Naive thymus-derived CD4-positive, alpha-beta T cell (primary cell): ENCODE measurements at regions of chr10 and their contacts with region 1.

Region 1: GRCh38 chr10:6088721-6089390 is at the start of gene RBM17:
- DNase-seq: peak; percentile 94 to 100 (median 99)
- ATAC-seq: peak; percentile 95
- H3K4me3 ChIP-seq: peak within 1 kb of the TSS; percentile 85
- H3K4me3 Mint-ChIP-seq: peak within 1 kb of the TSS; percentile 84 to 100 (median 94)
- H3K27ac ChIP-seq: peak within 1 kb of the TSS; percentile 84
- H3K27ac Mint-ChIP-seq: peak within 1 kb of the TSS; percentile 77 to 91 (median 87)
- H3K4me1 ChIP-seq: peaks cover 26 to 49% of the 10 kb centered on the region in 2 donors
- H3K4me1 Mint-ChIP-seq: peaks cover 46 to 77% (median 67%) of the 10 kb centered on the region in 7 donors
- H3K27me3 ChIP-seq: no peaks in the 10 kb centered on the region
- H3K27me3 Mint-ChIP-seq: no peaks in the 10 kb centered on the region
- total RNA-seq, gene RBM17: 120 to 158 (median 127) TPM

Region 2: GRCh38 chr10:5889624-5890451 is 199.0 kb before region 1 on chr10 and contains the starts of genes ANKRD16 and FBH1:
- CTCF ChIA-PET with region 1: no interaction called
- POLR2A ChIA-PET with region 1: no interaction called
- intact Hi-C with region 1: loop called (anchors 1 to 5 kb)
- DNase-seq: peak; percentile 94 to 100 (median 96)
- ATAC-seq: peak; percentile 96
- H3K4me3 ChIP-seq: peak within 1 kb of the TSS; percentile 70
- H3K4me3 Mint-ChIP-seq: peak within 1 kb of the TSS; percentile 90 to 97 (median 94)
- H3K27ac ChIP-seq: peak within 1 kb of the TSS; percentile 81
- H3K27ac Mint-ChIP-seq: peak within 1 kb of the TSS; percentile 80 to 94 (median 87)
- H3K4me1 ChIP-seq: peaks cover 12% of the 10 kb centered on the region in 2 donors
- H3K4me1 Mint-ChIP-seq: peaks cover 34 to 64% (median 60%) of the 10 kb centered on the region in 7 donors
- H3K27me3 ChIP-seq: no peaks in the 10 kb centered on the region
- H3K27me3 Mint-ChIP-seq: no peaks in the 10 kb centered on the region
- total RNA-seq, gene ANKRD16: 4.6 to 9.8 (median 7.2) TPM
- total RNA-seq, gene FBH1: 64.8 to 105 (median 78.6) TPM

Region 3: GRCh38 chr10:6014241-6014761 is 74.6 kb before region 1 on chr10:
- CTCF ChIA-PET with region 1: interaction called, 84 read pairs
- POLR2A ChIA-PET with region 1: interaction called, 22 read pairs
- intact Hi-C with region 1: loop called (anchors 1 kb)
- DNase-seq: peak in 7 of 9 donors; percentile 73 to 89 (median 86)
- ATAC-seq: peak; percentile 98
- H3K4me3 ChIP-seq: no peak overlapping the region
- H3K4me3 Mint-ChIP-seq: peak overlapping the region in 9 of 10 donors; percentile 5 to 61 (median 36)
- H3K27ac ChIP-seq: peak overlapping the region; percentile 82
- H3K27ac Mint-ChIP-seq: peak overlapping the region; percentile 85 to 99 (median 96)
- H3K4me1 ChIP-seq: peaks cover 9 to 15% of the 10 kb centered on the region in 2 donors
- H3K4me1 Mint-ChIP-seq: peaks cover 3 to 55% (median 25%) of the 10 kb centered on the region in 7 donors
- H3K27me3 ChIP-seq: no peaks in the 10 kb centered on the region
- H3K27me3 Mint-ChIP-seq: no peaks in the 10 kb centered on the region

Region 4: DNA sequence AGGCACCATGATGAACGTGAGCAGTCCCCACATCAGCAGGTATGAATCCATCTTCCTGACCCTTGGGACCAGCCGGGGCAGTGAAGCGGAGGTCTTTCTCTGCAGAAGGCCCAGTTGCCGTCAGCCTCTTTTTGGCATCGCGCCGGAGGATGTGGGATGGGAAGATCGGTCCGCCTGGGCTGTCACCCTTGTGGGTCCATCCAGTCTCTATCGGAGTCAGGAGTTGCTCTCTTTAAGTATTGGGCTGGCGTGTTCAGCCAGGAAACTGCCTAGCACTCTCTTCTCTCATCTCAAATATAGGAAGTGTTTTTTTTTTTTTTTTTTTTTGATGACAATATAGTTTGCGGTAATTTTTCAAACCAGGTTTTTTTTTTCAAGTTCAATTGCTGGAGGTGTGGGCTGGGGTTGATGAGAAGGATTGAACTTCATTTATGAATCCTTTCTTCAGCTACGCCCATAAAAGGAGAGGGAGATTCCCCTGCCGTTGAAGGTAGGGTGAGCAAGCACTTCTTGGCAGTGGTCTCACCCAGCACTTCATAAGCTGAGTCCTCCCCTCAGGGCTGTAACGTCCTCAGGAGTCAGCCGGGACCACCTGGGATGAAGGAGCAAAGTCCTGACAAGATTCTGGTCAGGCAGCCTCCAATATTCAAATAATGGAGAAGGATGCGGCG is 26.6 kb before region 1 on chr10 and contains the start of gene IL2RA:
- CTCF ChIA-PET with region 1: interaction called, 15 read pairs
- POLR2A ChIA-PET with region 1: interaction called, 21 read pairs
- intact Hi-C with region 1: loop called in 1 of 2 experiments (anchors 1 kb)
- DNase-seq: peak in 8 of 9 donors; percentile 57 to 79 (median 74)
- ATAC-seq: peak; percentile 92
- H3K4me3 ChIP-seq: peak within 1 kb of the TSS; percentile 54
- H3K4me3 Mint-ChIP-seq: peak within 1 kb of the TSS; percentile 77 to 91 (median 86)
- H3K27ac ChIP-seq: peak within 1 kb of the TSS; percentile 70
- H3K27ac Mint-ChIP-seq: peak within 1 kb of the TSS; percentile 75 to 94 (median 85)
- H3K4me1 ChIP-seq: peaks cover 16 to 27% of the 10 kb centered on the region in 2 donors
- H3K4me1 Mint-ChIP-seq: peaks cover 43 to 82% (median 71%) of the 10 kb centered on the region in 7 donors
- H3K27me3 ChIP-seq: no peaks in the 10 kb centered on the region
- H3K27me3 Mint-ChIP-seq: no peaks in the 10 kb centered on the region
- total RNA-seq, gene IL2RA: 2.5 to 266 (median 6.7) TPM

Region 5: DNA sequence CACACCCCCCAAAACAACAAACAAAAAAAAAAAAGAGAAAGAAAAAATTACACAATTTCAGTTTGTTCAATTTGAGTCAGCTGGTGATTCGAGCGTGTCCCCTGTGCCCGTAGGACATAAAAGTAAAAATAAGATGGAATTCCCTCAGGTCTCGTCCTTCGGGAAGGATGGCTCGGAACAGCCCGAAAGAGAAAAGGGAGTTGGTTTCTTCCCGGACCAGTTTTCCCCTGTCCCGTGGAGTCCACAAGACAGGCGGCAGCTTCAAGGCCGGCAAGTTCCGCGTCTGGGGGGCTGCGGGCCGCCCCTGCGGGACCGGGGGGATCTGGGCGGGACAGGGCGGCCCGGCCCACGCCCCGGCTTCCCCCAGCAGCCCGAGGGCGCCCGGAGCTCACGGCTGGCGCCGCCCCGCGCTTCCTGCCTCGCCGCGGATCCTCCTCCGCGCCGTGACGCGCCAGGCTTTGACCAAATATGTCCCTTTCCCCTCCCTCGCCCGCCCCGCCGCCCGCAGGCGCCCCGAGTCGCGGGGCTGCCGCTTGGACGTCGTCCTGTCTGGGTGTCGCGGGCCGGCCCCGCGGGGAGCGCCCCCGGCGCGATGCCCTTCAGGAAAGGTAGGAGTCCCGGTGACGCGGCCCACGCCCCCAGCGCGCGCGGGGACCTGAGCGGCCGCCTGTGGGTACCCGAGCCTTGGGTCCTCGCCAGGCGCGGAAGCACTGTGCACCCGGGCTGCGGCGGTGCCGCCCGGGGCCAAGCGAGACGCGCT is 55.7 kb after region 1 on chr10:
- CTCF ChIA-PET with region 1: interaction called, 3 read pairs
- POLR2A ChIA-PET with region 1: interaction called, 6 read pairs
- intact Hi-C with region 1: loop called (anchors 2 kb)
- DNase-seq: peak; percentile 79 to 92 (median 85)
- ATAC-seq: peak; percentile 94
- H3K4me3 ChIP-seq: peak overlapping the region; percentile 92
- H3K4me3 Mint-ChIP-seq: peak overlapping the region; percentile 81 to 92 (median 87)
- H3K27ac ChIP-seq: peak overlapping the region; percentile 86
- H3K27ac Mint-ChIP-seq: peak overlapping the region; percentile 74 to 91 (median 84)
- H3K4me1 ChIP-seq: peaks cover 24 to 39% of the 10 kb centered on the region in 2 donors
- H3K4me1 Mint-ChIP-seq: peaks cover 48 to 68% (median 60%) of the 10 kb centered on the region in 7 donors
- H3K27me3 ChIP-seq: no peaks in the 10 kb centered on the region
- H3K27me3 Mint-ChIP-seq: peaks cover 0 to 1% (median 0%) of the 10 kb centered on the region in 5 donors

Region 6: DNA sequence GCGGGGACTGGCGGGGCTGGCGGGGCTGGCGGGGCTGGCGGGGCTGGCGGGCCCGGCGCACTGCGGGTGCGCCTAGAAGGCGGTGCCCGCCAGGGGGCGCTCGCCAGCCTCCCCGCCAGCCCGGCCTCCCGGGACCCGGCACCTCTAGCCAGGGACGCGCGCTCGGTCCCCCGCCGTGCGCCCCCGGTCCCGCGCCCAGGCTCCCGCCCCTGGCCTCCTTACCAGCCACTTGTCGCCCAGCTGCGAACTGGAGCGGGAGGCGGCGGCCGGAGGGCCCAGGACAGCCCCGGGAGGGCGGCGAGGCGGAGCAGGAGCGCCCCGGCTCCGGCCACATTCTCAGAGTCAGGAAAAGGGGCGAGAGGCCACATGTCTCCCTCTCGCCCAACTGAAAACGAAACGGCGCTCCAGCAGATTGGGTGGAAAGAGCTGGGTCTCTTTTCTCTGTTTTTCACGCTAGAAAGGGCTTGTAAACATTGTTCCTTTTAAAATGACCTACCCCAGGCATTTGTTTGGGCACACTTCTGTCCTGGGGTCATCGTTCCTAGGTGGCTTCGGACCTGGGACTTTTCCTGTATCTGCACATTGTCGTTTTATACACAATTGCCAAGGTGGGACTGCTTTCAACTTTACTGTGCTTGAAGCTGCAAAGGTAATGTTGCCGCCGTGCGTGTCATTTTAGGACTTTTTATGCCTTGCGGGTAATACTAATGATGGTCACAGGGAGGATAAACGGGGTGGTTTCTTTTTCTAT is 491.6 kb after region 1 on chr10:
- CTCF ChIA-PET with region 1: no interaction called
- POLR2A ChIA-PET with region 1: no interaction called
- intact Hi-C with region 1: loop called in 1 of 2 experiments (anchors 10 kb)
- DNase-seq: peak; percentile 74 to 95 (median 84)
- ATAC-seq: peak; percentile 92
- H3K4me3 ChIP-seq: peak overlapping the region; percentile 88
- H3K4me3 Mint-ChIP-seq: peak overlapping the region; percentile 86 to 99 (median 93)
- H3K27ac ChIP-seq: peak overlapping the region; percentile 94
- H3K27ac Mint-ChIP-seq: peak overlapping the region; percentile 94 to 99 (median 98)
- H3K4me1 ChIP-seq: peaks cover 33 to 42% of the 10 kb centered on the region in 2 donors
- H3K4me1 Mint-ChIP-seq: peaks cover 35 to 67% (median 56%) of the 10 kb centered on the region in 7 donors
- H3K27me3 ChIP-seq: no peaks in the 10 kb centered on the region
- H3K27me3 Mint-ChIP-seq: no peaks in the 10 kb centered on the region